Dendritic cell treated with granulocyte-macrophage colony-stimulating factor and Interleukin-4, amounts not matched to agents 40 ng/mL and 50 ng/mL, for 4 days (primary cell): ENCODE measurements at regions of chr2 and their contacts with region 1.

Region 1: DNA sequence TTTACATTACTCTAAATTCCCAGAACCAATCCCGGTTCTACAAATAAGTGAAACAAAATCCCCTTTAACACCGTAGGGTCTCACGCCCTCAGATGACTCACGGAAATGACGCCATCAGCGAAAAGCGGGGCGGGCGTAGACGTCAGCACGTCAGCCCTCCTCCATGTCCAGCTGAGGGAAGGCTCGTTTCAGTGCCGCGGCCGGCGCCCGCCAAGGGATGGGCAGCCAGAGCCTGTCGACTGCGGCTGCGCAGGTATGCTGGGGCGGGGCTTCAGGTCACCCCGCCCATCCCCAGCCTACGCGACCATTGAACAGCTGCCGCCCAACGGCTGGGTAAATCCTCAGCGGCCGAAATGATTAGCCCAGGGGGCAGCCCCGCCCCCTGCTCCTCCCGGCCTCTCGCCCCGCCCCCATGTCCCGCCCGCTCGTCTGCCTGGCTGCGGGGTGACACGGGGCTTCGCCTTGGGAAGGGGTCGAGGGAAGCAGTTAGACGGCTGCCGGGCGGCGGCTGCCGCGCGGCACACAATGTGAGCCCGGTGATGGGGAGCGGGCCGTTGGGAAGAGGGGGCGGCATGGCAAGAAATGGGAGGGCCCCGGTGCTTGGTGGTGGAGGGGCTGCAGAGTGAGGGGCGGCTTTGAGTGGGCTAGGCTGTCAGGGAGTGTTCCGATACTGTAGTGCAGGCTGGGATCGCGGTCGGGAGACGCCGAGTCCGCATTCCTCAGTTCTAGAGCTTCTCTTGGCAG is at the start of gene NBEAL1:
- H3K4me3 Mint-ChIP-seq: peak within 1 kb of the TSS; percentile 99
- H3K27ac Mint-ChIP-seq: peak within 1 kb of the TSS; percentile 95
- H3K4me1 Mint-ChIP-seq: peaks cover 33% of the 10 kb centered on the region
- H3K27me3 Mint-ChIP-seq: peaks cover 2% of the 10 kb centered on the region

Region 2: GRCh38 chr2:202375609-202376408 is 638.8 kb before region 1 on chr2 and contains the start of gene BMPR2:
- intact Hi-C with region 1: loop called (anchors 10 kb)
- H3K4me3 Mint-ChIP-seq: peak within 1 kb of the TSS; percentile 88
- H3K27ac Mint-ChIP-seq: peak within 1 kb of the TSS; percentile 94
- H3K4me1 Mint-ChIP-seq: peaks cover 19% of the 10 kb centered on the region
- H3K27me3 Mint-ChIP-seq: peaks cover 9% of the 10 kb centered on the region

Region 3: GRCh38 chr2:202911512-202912341 is 102.9 kb before region 1 on chr2 and contains the starts of genes CARF and WDR12:
- intact Hi-C with region 1: loop called (anchors 5 kb)
- H3K4me3 Mint-ChIP-seq: peak within 1 kb of the TSS; percentile 98
- H3K27ac Mint-ChIP-seq: peak within 1 kb of the TSS; percentile 87
- H3K4me1 Mint-ChIP-seq: peaks cover 23% of the 10 kb centered on the region
- H3K27me3 Mint-ChIP-seq: no peaks in the 10 kb centered on the region

Region 4: GRCh38 chr2:202965810-202966460 is 48.7 kb before region 1 on chr2:
- intact Hi-C with region 1: loop called (anchors 2 kb)
- H3K4me3 Mint-ChIP-seq: no peak overlapping the region
- H3K27ac Mint-ChIP-seq: peak overlapping the region; percentile 66
- H3K4me1 Mint-ChIP-seq: peaks cover 5% of the 10 kb centered on the region
- H3K27me3 Mint-ChIP-seq: no peaks in the 10 kb centered on the region

Region 5: DNA sequence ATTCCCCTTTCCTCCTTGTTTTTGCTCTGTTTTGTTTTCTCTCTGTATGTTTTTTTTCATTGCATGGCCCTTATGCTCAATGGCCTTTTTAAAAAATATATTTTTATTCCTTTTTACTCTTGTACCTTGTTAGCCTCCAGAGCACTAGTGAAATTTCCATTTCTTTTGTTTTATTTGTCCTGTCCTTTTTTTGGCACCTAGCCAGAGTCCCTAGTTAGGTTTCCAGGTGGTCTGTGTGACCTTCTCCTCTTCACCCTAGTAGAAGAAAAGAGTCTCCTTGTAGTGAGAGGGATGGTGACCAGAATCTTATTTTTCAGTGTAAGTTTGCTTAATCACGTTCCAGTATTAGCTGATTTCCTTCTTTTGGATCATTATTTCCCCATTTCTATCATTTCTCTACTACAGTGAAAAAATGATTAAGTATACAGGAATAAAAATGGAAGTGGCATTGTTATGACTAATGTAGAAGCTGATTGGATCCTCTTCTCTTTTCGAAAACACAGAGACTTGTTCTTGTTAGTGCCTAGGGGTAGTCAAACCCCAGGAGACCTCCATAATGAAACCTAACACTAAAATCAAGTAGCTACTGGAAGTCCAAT is 65.9 kb after region 1 on chr2:
- intact Hi-C with region 1: loop called (anchors 2 kb)
- H3K4me3 Mint-ChIP-seq: no peak overlapping the region
- H3K27ac Mint-ChIP-seq: peak overlapping the region; percentile 76
- H3K4me1 Mint-ChIP-seq: peaks cover 13% of the 10 kb centered on the region
- H3K27me3 Mint-ChIP-seq: no peaks in the 10 kb centered on the region